CD4-positive, alpha-beta T cell (primary cell): ENCODE measurements at regions of chr7 and their contacts with region 1.

Region 1: GRCh38 chr7:54299426-54299825 is 242.7 kb upstream of the VSTM2A start:
- DNase-seq: no peak
- ATAC-seq: no peak
- H3K4me3 ChIP-seq: no peak overlapping the region
- H3K4me3 Mint-ChIP-seq: no peak overlapping the region
- H3K27ac ChIP-seq: no peak overlapping the region
- H3K27ac Mint-ChIP-seq: no peak overlapping the region
- H3K4me1 ChIP-seq: no peaks in the 10 kb centered on the region
- H3K4me1 Mint-ChIP-seq: no peaks in the 10 kb centered on the region
- H3K27me3 ChIP-seq: no peaks in the 10 kb centered on the region
- H3K27me3 Mint-ChIP-seq: no peaks in the 10 kb centered on the region
- CTCF ChIP-seq: no peak

Region 2: GRCh38 chr7:54215424-54215823 is 84.0 kb before region 1 on chr7:
- CTCF ChIA-PET with region 1: no interaction called
- POLR2A ChIA-PET with region 1: no interaction called
- intact Hi-C with region 1: loop called in 1 of 2 experiments (anchors 10 kb)
- DNase-seq: no peak
- ATAC-seq: no peak
- H3K4me3 ChIP-seq: no peak overlapping the region
- H3K4me3 Mint-ChIP-seq: no peak overlapping the region
- H3K27ac ChIP-seq: no peak overlapping the region
- H3K27ac Mint-ChIP-seq: no peak overlapping the region
- H3K4me1 ChIP-seq: no peaks in the 10 kb centered on the region
- H3K4me1 Mint-ChIP-seq: no peaks in the 10 kb centered on the region
- H3K27me3 ChIP-seq: no peaks in the 10 kb centered on the region
- H3K27me3 Mint-ChIP-seq: no peaks in the 10 kb centered on the region
- CTCF ChIP-seq: no peak

Region 3: GRCh38 chr7:54260941-54261371 is 38.5 kb before region 1 on chr7:
- CTCF ChIA-PET with region 1: no interaction called
- POLR2A ChIA-PET with region 1: no interaction called
- intact Hi-C with region 1: no loop called
- DNase-seq: no peak
- ATAC-seq: no peak
- H3K4me3 ChIP-seq: no peak overlapping the region
- H3K4me3 Mint-ChIP-seq: no peak overlapping the region
- H3K27ac ChIP-seq: no peak overlapping the region
- H3K27ac Mint-ChIP-seq: no peak overlapping the region
- H3K4me1 ChIP-seq: no peaks in the 10 kb centered on the region
- H3K4me1 Mint-ChIP-seq: no peaks in the 10 kb centered on the region
- H3K27me3 ChIP-seq: no peaks in the 10 kb centered on the region
- H3K27me3 Mint-ChIP-seq: no peaks in the 10 kb centered on the region
- CTCF ChIP-seq: no peak